WTC11 (cell line): ENCODE measurements at regions of chr4 and their contacts with region 1.

Region 1: DNA sequence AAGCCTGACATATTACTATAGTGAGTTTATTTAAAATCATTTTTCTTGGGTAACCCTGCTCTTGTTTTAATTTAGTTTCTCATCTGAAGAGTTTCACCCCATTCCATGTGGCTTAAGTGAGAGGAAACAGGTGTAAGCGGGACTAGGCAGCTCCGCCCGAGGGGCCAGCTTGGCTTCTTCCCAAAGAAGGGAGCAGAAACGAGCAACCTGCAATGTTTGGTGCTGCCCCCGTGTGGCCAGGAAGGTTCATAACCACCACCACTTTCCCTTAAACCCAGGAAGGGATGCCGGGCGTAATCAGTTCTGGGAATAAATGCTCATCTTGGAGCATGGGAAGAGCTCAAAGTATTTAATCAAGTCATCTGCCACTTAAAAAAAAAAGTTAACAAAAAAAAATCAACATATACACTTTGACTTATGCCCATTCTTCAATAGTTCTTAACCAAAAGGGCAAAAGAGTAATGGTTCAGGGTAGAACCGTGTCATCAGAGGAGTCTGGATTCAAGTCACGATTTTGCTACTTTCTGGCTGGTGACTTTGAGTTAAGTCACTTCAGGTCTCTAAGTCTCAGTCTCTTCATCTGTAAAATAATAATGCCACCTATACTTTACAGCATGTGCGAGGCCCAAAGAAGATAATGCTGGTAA is 147.9 kb downstream of the NSUN7 start:
- DNase-seq: peak; percentile 86
- ATAC-seq: peak; percentile 91
- H3K4me3 Mint-ChIP-seq: no peak overlapping the region
- H3K27ac Mint-ChIP-seq: no peak overlapping the region
- H3K4me1 Mint-ChIP-seq: peaks cover 5% of the 10 kb centered on the region
- H3K27me3 Mint-ChIP-seq: no peaks in the 10 kb centered on the region
- CTCF ChIP-seq: peak; percentile 76

Region 2: GRCh38 chr4:40848940-40849339 is 48.7 kb before region 1 on chr4:
- CTCF ChIA-PET with region 1: interaction called, 22 read pairs
- POLR2A ChIA-PET with region 1: no interaction called
- DNase-seq: no peak
- ATAC-seq: no peak
- H3K4me3 Mint-ChIP-seq: no peak overlapping the region
- H3K27ac Mint-ChIP-seq: peak overlapping the region; percentile 52; the same call in 1 of the 2 replicates
- H3K4me1 Mint-ChIP-seq: peaks cover 38% of the 10 kb centered on the region
- H3K27me3 Mint-ChIP-seq: no peaks in the 10 kb centered on the region
- CTCF ChIP-seq: no peak

Region 3: GRCh38 chr4:40875507-40876150 is 22.1 kb before region 1 on chr4:
- CTCF ChIA-PET with region 1: interaction called, 18 read pairs
- POLR2A ChIA-PET with region 1: no interaction called
- DNase-seq: no peak
- ATAC-seq: no peak
- H3K4me3 Mint-ChIP-seq: no peak overlapping the region
- H3K27ac Mint-ChIP-seq: peak overlapping the region; percentile 21; the same call in 1 of the 2 replicates
- H3K4me1 Mint-ChIP-seq: peaks cover 13% of the 10 kb centered on the region
- H3K27me3 Mint-ChIP-seq: no peaks in the 10 kb centered on the region
- CTCF ChIP-seq: no peak

Region 4: GRCh38 chr4:40887288-40888131 is 10.2 kb before region 1 on chr4:
- CTCF ChIA-PET with region 1: interaction called, 24 read pairs
- POLR2A ChIA-PET with region 1: interaction called, 3 read pairs
- DNase-seq: no peak
- ATAC-seq: no peak
- H3K4me3 Mint-ChIP-seq: no peak overlapping the region
- H3K27ac Mint-ChIP-seq: peak overlapping the region; percentile 54
- H3K4me1 Mint-ChIP-seq: no peaks in the 10 kb centered on the region
- H3K27me3 Mint-ChIP-seq: no peaks in the 10 kb centered on the region
- CTCF ChIP-seq: no peak

Region 5: GRCh38 chr4:40924096-40924792 is 26.6 kb after region 1 on chr4:
- CTCF ChIA-PET with region 1: interaction called, 15 read pairs
- POLR2A ChIA-PET with region 1: no interaction called
- DNase-seq: peak; percentile 81
- ATAC-seq: peak; percentile 59
- H3K4me3 Mint-ChIP-seq: no peak overlapping the region
- H3K27ac Mint-ChIP-seq: no peak overlapping the region
- H3K4me1 Mint-ChIP-seq: peaks cover 16% of the 10 kb centered on the region
- H3K27me3 Mint-ChIP-seq: no peaks in the 10 kb centered on the region
- CTCF ChIP-seq: peak; percentile 87